Dendritic cell treated with granulocyte-macrophage colony-stimulating factor and Interleukin-4, amounts not matched to agents 40 ng/mL and 50 ng/mL, for 4 days (primary cell): ENCODE measurements at regions of chr18 and their contacts with region 1.

Region 1: GRCh38 chr18:3245853-3246634 is 1.6 kb upstream of the MYL12A start:
- H3K4me3 Mint-ChIP-seq: peak overlapping the region; percentile 85
- H3K27ac Mint-ChIP-seq: peak overlapping the region; percentile 99
- H3K4me1 Mint-ChIP-seq: peaks cover 42% of the 10 kb centered on the region
- H3K27me3 Mint-ChIP-seq: no peaks in the 10 kb centered on the region

Region 2: DNA sequence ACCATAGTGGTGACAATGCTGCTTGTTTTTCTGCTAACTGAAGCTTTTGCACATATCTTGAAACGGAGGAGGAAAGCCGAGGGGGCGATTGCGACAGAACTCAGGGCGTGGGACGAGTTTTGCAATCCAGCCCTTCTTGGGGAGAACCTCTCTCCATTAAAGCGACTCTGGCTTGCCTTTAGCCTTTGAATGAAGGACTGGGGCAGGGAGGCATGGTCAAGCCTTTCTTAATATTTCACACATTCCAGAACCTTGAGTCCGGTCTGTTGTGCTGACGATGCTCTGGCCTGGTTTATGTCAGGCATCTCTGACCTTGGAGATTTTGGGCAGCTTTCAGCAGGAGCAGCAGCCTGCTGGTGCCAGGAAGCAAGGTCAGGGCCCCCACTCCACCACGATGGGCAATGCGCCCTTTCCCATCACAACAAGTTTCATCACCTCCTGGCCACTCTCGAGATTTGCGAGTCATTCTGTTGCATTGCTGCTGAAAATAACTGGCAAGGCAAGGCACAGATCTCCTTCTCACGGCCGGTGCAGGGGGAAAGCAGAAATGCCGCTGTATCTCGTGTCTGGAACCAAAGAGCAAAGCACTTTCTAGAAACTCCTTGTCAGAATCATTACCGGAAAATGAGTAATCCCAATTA is 388.4 kb before region 1 on chr18:
- intact Hi-C with region 1: loop called (anchors 5 kb)
- H3K4me3 Mint-ChIP-seq: peak overlapping the region; percentile 61
- H3K27ac Mint-ChIP-seq: peak overlapping the region; percentile 97
- H3K4me1 Mint-ChIP-seq: peaks cover 79% of the 10 kb centered on the region
- H3K27me3 Mint-ChIP-seq: no peaks in the 10 kb centered on the region

Region 3: GRCh38 chr18:2985628-2986027 is 260.4 kb before region 1 on chr18:
- intact Hi-C with region 1: loop called (anchors 10 kb)
- H3K4me3 Mint-ChIP-seq: no peak overlapping the region
- H3K27ac Mint-ChIP-seq: no peak overlapping the region
- H3K4me1 Mint-ChIP-seq: peaks cover 35% of the 10 kb centered on the region
- H3K27me3 Mint-ChIP-seq: no peaks in the 10 kb centered on the region

Region 4: DNA sequence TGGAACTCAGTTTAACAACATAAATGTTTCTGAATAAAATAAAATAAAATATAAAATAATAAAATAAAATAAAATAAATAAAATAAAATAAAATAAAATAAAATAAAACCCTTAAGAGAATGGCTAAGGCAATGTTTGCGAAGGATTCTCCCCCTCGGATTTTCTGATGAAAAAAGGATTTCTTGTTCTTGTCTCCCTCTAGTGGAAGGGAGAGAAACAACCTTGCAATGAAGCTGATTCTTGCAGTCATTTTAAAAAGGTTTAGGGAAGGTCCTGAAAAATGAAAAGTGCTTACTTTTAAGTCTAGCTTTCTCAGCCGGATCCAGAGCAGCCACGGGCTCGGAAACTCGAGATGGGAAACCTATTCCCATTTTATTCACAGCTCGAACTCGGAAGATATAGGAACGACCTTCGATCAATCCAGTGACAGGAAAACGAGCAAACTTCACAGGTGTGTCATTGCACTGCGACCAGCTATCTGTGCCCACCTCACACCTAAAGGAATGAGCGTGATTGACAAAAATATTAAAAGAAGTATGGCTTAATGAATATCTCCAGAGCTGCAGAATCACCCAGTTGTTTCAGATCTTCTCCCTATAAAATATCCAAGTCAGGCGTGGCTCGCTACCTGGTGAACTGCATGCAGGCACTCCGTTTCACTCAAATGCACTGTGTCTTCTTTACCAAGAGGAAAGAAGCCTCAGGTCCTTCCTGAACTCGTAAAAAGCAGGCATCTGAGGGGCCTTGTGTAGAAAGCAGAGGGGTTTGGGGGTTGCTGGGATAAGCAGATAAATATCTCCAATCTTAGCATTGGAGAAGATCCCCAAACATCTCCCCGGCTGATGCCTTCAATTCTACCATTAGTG is 94.4 kb before region 1 on chr18:
- intact Hi-C with region 1: loop called (anchors 2 kb)
- H3K4me3 Mint-ChIP-seq: no peak overlapping the region
- H3K27ac Mint-ChIP-seq: no peak overlapping the region
- H3K4me1 Mint-ChIP-seq: peaks cover 7% of the 10 kb centered on the region
- H3K27me3 Mint-ChIP-seq: no peaks in the 10 kb centered on the region

Region 5: GRCh38 chr18:3256693-3257626 is 10.9 kb after region 1 on chr18:
- intact Hi-C with region 1: loop called (anchors 1 kb)
- H3K4me3 Mint-ChIP-seq: no peak overlapping the region
- H3K27ac Mint-ChIP-seq: peak overlapping the region; percentile 67
- H3K4me1 Mint-ChIP-seq: peaks cover 57% of the 10 kb centered on the region
- H3K27me3 Mint-ChIP-seq: no peaks in the 10 kb centered on the region